CD4-positive, alpha-beta T cell (primary cell): ENCODE measurements at regions of chr1 and their contacts with region 1.

Region 1: GRCh38 chr1:6624710-6625583 is at the start of gene THAP3:
- DNase-seq: peak; percentile 86 to 95 (median 90)
- ATAC-seq: peak; percentile 98
- H3K4me3 ChIP-seq: peak within 1 kb of the TSS; percentile 72
- H3K4me3 Mint-ChIP-seq: peak within 1 kb of the TSS; percentile 94
- H3K27ac ChIP-seq: peak within 1 kb of the TSS in 1 of 2 donors; percentile 38
- H3K27ac Mint-ChIP-seq: peak within 1 kb of the TSS; percentile 84
- H3K4me1 ChIP-seq: peaks cover 31% of the 10 kb centered on the region
- H3K4me1 Mint-ChIP-seq: peaks cover 29% of the 10 kb centered on the region
- H3K27me3 ChIP-seq: no peaks in the 10 kb centered on the region
- H3K27me3 Mint-ChIP-seq: no peaks in the 10 kb centered on the region
- CTCF ChIP-seq: peak; percentile 31
- total RNA-seq, gene THAP3: 15.2 to 18.7 TPM

Region 2: DNA sequence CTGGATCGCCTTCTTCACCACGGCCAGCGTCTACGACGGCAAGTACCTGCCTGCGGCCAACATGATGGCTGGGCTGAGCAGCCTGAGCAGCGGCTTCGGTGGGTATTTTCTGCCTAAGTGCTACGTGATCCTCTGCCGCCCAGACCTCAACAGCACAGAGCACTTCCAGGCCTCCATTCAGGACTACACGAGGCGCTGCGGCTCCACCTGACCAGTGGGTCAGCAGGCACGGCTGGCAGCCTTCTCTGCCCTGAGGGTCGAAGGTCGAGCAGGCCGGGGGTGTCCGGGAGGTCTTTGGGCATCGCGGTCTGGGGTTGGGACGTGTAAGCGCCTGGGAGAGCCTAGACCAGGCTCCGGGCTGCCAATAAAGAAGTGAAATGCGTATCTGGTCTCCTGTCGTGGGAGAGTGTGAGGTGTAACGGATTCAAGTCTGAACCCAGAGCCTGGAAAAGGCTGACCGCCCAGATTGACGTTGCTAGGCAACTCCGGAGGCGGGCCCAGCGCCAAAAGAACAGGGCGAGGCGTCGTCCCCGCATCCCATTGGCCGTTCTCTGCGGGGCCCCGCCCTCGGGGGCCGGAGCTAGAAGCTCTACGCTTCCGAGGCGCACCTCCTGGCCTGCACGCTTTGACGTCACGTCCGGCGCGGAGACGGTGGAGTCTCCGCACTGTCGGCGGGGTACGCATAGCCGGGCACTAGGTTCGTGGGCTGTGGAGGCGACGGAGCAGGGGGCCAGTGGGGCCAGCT is 45.4 kb before region 1 on chr1 and contains the start of gene ZBTB48:
- CTCF ChIA-PET with region 1: no interaction called
- POLR2A ChIA-PET with region 1: interaction called, 3 read pairs
- intact Hi-C with region 1: loop called (anchors 1 to 2 kb)
- DNase-seq: peak; percentile 91 to 99 (median 96)
- ATAC-seq: peak; percentile 99
- H3K4me3 ChIP-seq: peak within 1 kb of the TSS; percentile 87
- H3K4me3 Mint-ChIP-seq: peak within 1 kb of the TSS; percentile 98
- H3K27ac ChIP-seq: peak within 1 kb of the TSS; percentile 79 to 82
- H3K27ac Mint-ChIP-seq: peak within 1 kb of the TSS; percentile 93
- H3K4me1 ChIP-seq: peaks cover 36% of the 10 kb centered on the region
- H3K4me1 Mint-ChIP-seq: peaks cover 34% of the 10 kb centered on the region
- H3K27me3 ChIP-seq: peaks cover 0 to 3% of the 10 kb centered on the region in 2 experiments
- H3K27me3 Mint-ChIP-seq: no peaks in the 10 kb centered on the region
- CTCF ChIP-seq: no peak
- total RNA-seq, gene ZBTB48: 31.4 to 31.7 TPM

Region 3: DNA sequence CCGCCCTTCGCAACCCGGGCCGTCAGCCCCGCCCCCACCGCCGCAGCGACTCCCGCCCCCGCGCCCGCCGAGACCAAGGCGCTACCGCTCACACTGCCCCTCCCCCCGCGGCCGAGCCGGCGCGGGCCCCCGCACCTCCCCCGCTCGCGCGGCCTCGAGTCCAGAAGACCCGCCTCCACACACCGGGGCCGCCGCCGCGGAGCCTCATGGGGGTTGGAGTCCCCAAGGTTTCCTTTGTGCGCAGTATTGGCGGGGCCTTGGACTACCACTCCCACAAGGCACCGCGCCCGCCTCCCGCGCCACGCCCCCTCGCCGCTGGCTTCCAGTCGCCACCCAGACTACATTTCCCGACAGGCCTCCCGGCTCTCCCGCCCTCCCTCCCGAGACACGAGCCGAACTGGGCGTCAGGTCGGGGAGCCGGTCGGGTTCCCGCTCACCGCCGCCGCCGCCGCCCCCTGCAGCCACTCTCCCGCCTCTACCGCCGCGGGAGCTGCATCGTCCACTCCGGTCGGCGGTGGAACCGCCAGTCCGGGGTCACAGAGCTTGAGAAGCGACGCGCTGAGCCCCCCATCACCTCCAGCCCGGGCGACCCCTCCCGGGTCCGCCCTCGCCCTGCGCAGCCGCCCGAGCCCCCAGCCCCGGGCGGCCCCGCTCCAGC is 11.5 kb before region 1 on chr1 and contains the start of gene PHF13:
- CTCF ChIA-PET with region 1: interaction called, 3 read pairs
- POLR2A ChIA-PET with region 1: interaction called, 5 read pairs
- intact Hi-C with region 1: loop called in 1 of 2 experiments (anchors 1 kb)
- DNase-seq: peak; percentile 97 to 100 (median 99)
- ATAC-seq: peak; percentile 94
- H3K4me3 ChIP-seq: peak within 1 kb of the TSS; percentile 65
- H3K4me3 Mint-ChIP-seq: peak within 1 kb of the TSS; percentile 98
- H3K27ac ChIP-seq: peak within 1 kb of the TSS; percentile 32 to 50
- H3K27ac Mint-ChIP-seq: peak within 1 kb of the TSS; percentile 90
- H3K4me1 ChIP-seq: peaks cover 18% of the 10 kb centered on the region
- H3K4me1 Mint-ChIP-seq: peaks cover 26% of the 10 kb centered on the region
- H3K27me3 ChIP-seq: no peaks in the 10 kb centered on the region
- H3K27me3 Mint-ChIP-seq: no peaks in the 10 kb centered on the region
- CTCF ChIP-seq: no peak
- total RNA-seq, gene PHF13: 4.0 to 4.9 TPM

Region 4: GRCh38 chr1:6701437-6702153 is 76.6 kb after region 1 on chr1 and contains the start of gene DNAJC11:
- CTCF ChIA-PET with region 1: no interaction called
- POLR2A ChIA-PET with region 1: no interaction called
- intact Hi-C with region 1: loop called in 1 of 2 experiments (anchors 1 kb)
- DNase-seq: peak; percentile 80 to 95 (median 88)
- ATAC-seq: peak; percentile 98
- H3K4me3 ChIP-seq: peak within 1 kb of the TSS; percentile 86
- H3K4me3 Mint-ChIP-seq: peak within 1 kb of the TSS; percentile 96
- H3K27ac ChIP-seq: peak within 1 kb of the TSS in 1 of 2 donors; percentile 60
- H3K27ac Mint-ChIP-seq: peak within 1 kb of the TSS; percentile 76
- H3K4me1 ChIP-seq: peaks cover 18% of the 10 kb centered on the region
- H3K4me1 Mint-ChIP-seq: peaks cover 43% of the 10 kb centered on the region
- H3K27me3 ChIP-seq: no peaks in the 10 kb centered on the region
- H3K27me3 Mint-ChIP-seq: no peaks in the 10 kb centered on the region
- CTCF ChIP-seq: peak; percentile 55
- total RNA-seq, gene DNAJC11: 20.6 to 24.0 TPM